Natural killer cell (primary cell): ENCODE measurements at regions of chr7 and their contacts with region 1.

Region 1: DNA sequence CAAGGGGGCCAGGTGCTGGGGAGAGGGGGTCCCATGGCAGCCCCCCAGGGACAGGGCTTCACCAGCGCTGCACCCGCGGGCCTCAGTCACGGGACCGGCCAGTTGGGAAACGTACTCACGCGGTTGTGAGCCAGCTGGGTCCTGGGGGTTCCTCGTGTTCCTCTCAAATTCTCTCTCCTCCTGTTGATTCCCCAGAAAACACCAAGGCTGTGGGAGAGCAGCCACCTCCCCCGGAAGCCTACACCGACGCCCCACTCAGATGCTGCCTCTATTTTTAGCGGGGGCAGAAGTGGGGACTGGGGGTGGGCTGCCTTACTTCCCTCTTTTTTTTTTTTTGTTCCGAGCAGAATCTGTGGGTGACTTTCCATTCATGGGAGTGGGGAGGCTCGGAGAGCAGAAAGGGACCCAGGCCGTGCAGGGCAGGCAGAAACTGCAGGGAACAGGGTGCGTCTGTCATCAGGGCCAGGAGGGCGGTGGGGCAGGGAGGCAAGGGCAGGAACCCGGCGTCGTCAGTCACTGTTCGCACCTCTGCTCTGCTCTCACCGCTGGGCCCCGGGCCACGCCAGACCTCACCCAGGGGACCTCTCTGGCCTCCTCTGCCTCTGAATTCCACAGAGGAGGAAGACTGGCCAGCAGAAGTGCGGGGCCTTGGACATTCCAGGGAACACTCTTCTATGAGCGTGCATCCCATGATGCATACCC is 63.1 kb downstream of the CARD11 start:
- DNase-seq: peak; percentile 32 to 60
- ATAC-seq: peak; percentile 61 to 70 (median 63)
- H3K4me3 ChIP-seq: peak overlapping the region; percentile 48
- H3K4me3 Mint-ChIP-seq: peak overlapping the region; percentile 96
- H3K27ac ChIP-seq: peak overlapping the region; percentile 80
- H3K27ac Mint-ChIP-seq: peak overlapping the region; percentile 91 to 93
- H3K4me1 ChIP-seq: peaks cover 83% of the 10 kb centered on the region
- H3K4me1 Mint-ChIP-seq: peaks cover 81 to 89% of the 10 kb centered on the region in 2 donors
- H3K27me3 ChIP-seq: no peaks in the 10 kb centered on the region
- H3K27me3 Mint-ChIP-seq: no peaks in the 10 kb centered on the region
- CTCF ChIP-seq: no peak

Region 2: GRCh38 chr7:2944739-2945138 is 35.8 kb before region 1 on chr7:
- intact Hi-C with region 1: loop called (anchors 5 kb)
- DNase-seq: no peak
- ATAC-seq: no peak
- H3K4me3 ChIP-seq: no peak overlapping the region
- H3K4me3 Mint-ChIP-seq: no peak overlapping the region
- H3K27ac ChIP-seq: no peak overlapping the region
- H3K27ac Mint-ChIP-seq: peak overlapping the region; percentile 67 to 71
- H3K4me1 ChIP-seq: no peaks in the 10 kb centered on the region
- H3K4me1 Mint-ChIP-seq: peaks cover 36 to 44% of the 10 kb centered on the region in 2 donors
- H3K27me3 ChIP-seq: no peaks in the 10 kb centered on the region
- H3K27me3 Mint-ChIP-seq: no peaks in the 10 kb centered on the region
- CTCF ChIP-seq: no peak

Region 3: GRCh38 chr7:3028071-3028757 is 47.7 kb after region 1 on chr7:
- intact Hi-C with region 1: loop called (anchors 5 kb)
- DNase-seq: peak in 1 of 2 donors; percentile 26
- ATAC-seq: peak in 2 of 3 donors; percentile 40 to 56
- H3K4me3 ChIP-seq: no peak overlapping the region
- H3K4me3 Mint-ChIP-seq: peak overlapping the region; percentile 72
- H3K27ac ChIP-seq: peak overlapping the region; percentile 65
- H3K27ac Mint-ChIP-seq: peak overlapping the region; percentile 92 to 95
- H3K4me1 ChIP-seq: peaks cover 36% of the 10 kb centered on the region
- H3K4me1 Mint-ChIP-seq: peaks cover 59 to 77% of the 10 kb centered on the region in 2 donors
- H3K27me3 ChIP-seq: no peaks in the 10 kb centered on the region
- H3K27me3 Mint-ChIP-seq: no peaks in the 10 kb centered on the region
- CTCF ChIP-seq: no peak

Region 4: GRCh38 chr7:3106361-3106826 is 125.8 kb after region 1 on chr7:
- intact Hi-C with region 1: loop called (anchors 5 kb)
- DNase-seq: peak in 1 of 2 donors; percentile 42
- ATAC-seq: peak; percentile 39 to 59 (median 57)
- H3K4me3 ChIP-seq: no peak overlapping the region
- H3K4me3 Mint-ChIP-seq: peak overlapping the region; percentile 77
- H3K27ac ChIP-seq: peak overlapping the region; percentile 93
- H3K27ac Mint-ChIP-seq: peak overlapping the region; percentile 94 to 95
- H3K4me1 ChIP-seq: peaks cover 83% of the 10 kb centered on the region
- H3K4me1 Mint-ChIP-seq: peaks cover 79 to 92% of the 10 kb centered on the region in 2 donors
- H3K27me3 ChIP-seq: no peaks in the 10 kb centered on the region
- H3K27me3 Mint-ChIP-seq: no peaks in the 10 kb centered on the region
- CTCF ChIP-seq: no peak